ENCODE measurements at regions of chr1 and their contacts with region 1.

Region 1: GRCh38 chr1:66446261-66447001 is 87.5 kb upstream of the SGIP1 start:
- DNase-seq: peak in 5 of 7 donors; percentile 16 to 31 (median 23)
- H3K4me3 ChIP-seq: no peak overlapping the region
- H3K27ac ChIP-seq: no peak overlapping the region
- H3K4me1 ChIP-seq: no peaks in the 10 kb centered on the region
- H3K27me3 ChIP-seq: no peaks in the 10 kb centered on the region
- CTCF ChIP-seq: peak; percentile 84 to 97 (median 94)
- POLR2A ChIP-seq: no peak

Region 2: DNA sequence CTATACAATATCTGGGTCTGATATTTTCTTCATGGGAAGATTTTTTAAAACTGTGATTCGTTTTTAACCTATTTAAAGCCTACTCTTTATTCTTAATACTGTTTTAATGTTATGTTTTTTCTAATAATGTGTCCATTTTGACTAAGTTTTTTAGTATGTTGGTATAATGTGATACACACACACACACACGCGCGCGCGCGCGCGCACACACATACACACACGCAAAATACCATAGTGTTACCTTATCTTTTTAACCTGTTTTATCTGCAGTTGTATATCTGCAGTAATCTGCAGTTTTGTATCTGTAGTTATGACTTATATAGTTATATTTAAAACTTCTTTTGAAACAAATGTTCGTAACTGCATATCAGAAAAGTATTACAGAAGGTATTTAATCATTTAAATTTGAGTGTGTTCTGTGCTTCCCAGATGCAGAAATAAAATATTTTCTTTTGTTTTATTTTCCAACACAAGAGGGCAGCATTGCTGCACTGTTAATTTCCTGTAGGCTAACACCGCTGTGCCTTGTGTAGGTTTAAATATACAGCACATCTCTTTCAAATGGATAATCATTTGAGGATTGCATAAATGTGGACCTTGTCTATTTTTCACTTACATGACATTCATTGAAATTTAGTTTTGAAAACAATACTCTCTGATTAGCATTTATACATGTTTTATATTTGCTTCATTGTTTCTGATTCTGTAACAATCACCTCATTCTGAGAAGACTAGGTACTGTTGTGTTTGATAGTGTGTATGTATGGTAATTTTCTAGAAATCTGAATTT is 487.7 kb before region 1 on chr1:
- intact Hi-C with region 1: loop called (anchors 5 kb)
- DNase-seq: peak in 2 of 7 donors; percentile 15 to 24
- H3K4me3 ChIP-seq: no peak overlapping the region
- H3K27ac ChIP-seq: no peak overlapping the region
- H3K4me1 ChIP-seq: no peaks in the 10 kb centered on the region
- H3K27me3 ChIP-seq: no peaks in the 10 kb centered on the region
- CTCF ChIP-seq: peak; percentile 62 to 89 (median 76)
- POLR2A ChIP-seq: no peak

Region 3: GRCh38 chr1:66033781-66034180 is 412.6 kb before region 1 on chr1:
- intact Hi-C with region 1: no loop called
- DNase-seq: no peak
- H3K4me3 ChIP-seq: no peak overlapping the region
- H3K27ac ChIP-seq: no peak overlapping the region
- H3K4me1 ChIP-seq: no peaks in the 10 kb centered on the region
- H3K27me3 ChIP-seq: no peaks in the 10 kb centered on the region
- CTCF ChIP-seq: no peak
- POLR2A ChIP-seq: no peak

Region 4: DNA sequence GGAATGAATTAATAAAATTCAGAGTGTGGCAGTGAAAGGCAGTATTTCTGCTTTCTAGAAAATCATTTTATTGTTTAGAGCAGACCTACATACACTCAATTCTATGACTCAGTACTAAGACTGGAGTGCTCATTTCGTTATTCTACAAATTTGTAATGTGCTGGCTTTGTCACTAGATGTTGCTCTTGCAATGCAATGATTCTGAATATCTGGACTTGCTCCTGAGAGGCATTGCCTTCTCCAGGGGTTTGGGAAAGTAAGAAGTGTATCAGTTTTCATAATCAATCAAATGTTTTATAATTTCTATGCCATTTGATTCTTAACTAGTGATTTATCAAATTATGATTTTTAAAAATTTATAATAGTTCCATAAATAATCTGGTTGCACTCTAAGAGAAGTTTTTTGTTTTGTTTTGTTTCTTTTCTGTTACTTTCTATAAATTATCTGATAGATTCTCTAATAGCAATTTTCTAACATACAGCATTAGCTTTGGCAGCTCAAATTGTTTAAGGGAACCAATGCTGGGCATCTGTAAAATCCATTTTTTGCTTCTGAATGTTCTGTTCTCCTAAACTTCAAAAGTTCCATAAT is 193.0 kb before region 1 on chr1:
- intact Hi-C with region 1: loop called (anchors 2 to 5 kb)
- DNase-seq: peak in 1 of 7 donors; percentile 31
- H3K4me3 ChIP-seq: no peak overlapping the region
- H3K27ac ChIP-seq: no peak overlapping the region
- H3K4me1 ChIP-seq: no peaks in the 10 kb centered on the region
- H3K27me3 ChIP-seq: no peaks in the 10 kb centered on the region
- CTCF ChIP-seq: peak; percentile 58 to 92 (median 81)
- POLR2A ChIP-seq: no peak

Region 5: GRCh38 chr1:66374561-66375111 is 71.8 kb before region 1 on chr1:
- intact Hi-C with region 1: no loop called
- DNase-seq: no peak
- H3K4me3 ChIP-seq: no peak overlapping the region
- H3K27ac ChIP-seq: peak overlapping the region in 1 of 5 donors; percentile 36
- H3K4me1 ChIP-seq: peaks cover 0 to 17% of the 10 kb centered on the region in 2 donors
- H3K27me3 ChIP-seq: no peaks in the 10 kb centered on the region
- CTCF ChIP-seq: no peak
- POLR2A ChIP-seq: no peak

Measured in adrenal gland (tissue), 19 donors.